Transverse colon (tissue), 4 donors: ENCODE measurements at regions of chr9 and their contacts with region 1.

Region 1: DNA sequence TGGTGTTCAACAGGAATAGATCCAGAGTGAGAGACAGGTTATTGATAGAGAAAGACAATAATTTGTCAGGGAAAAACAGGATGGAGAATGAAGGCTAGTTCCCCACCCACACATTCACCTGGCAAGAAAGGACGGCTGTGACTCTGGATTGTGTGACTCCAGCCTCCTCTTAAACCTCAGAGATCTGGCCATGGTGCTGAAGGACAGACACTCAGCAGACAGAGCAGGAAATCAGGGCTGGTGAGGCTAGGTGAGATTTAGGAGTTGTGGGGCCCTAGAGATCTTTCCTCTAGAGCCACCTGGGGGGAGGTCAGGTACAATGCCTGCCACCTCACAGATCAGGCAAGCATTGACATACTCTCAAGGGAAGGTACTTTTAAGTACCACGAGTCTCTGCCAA is 15.2 kb downstream of the OR1B1 start:
- DNase-seq: no peak
- H3K4me3 ChIP-seq: no peak overlapping the region
- H3K27ac ChIP-seq: no peak overlapping the region
- H3K4me1 ChIP-seq: no peaks in the 10 kb centered on the region
- H3K27me3 ChIP-seq: no peaks in the 10 kb centered on the region
- CTCF ChIP-seq: no peak
- EP300 ChIP-seq: no peak
- POLR2A ChIP-seq: no peak

Region 2: DNA sequence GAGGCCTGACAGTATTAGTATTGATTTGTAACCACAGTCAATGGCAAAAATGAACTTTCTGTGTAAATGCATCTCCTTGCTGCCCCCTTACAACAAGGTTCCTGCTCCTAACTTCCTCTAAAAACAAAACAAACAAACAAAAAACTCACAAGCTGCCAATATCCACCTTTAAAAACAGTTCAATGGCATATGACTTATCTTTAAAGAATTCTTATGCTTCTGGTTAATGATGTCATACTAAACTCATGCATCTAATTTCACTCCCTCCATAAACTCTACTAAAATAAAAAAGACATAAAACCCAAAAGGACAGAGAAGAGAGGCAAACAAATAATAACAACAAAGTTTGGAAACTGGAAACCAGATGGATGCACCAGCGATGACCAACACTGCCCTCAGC is 106.1 kb before region 1 on chr9:
- in situ Hi-C with region 1: loop called in 1 of 4 experiments (anchors 25 kb)
- intact Hi-C with region 1: no loop called
- DNase-seq: no peak
- H3K4me3 ChIP-seq: no peak overlapping the region
- H3K27ac ChIP-seq: no peak overlapping the region
- H3K4me1 ChIP-seq: no peaks in the 10 kb centered on the region
- H3K27me3 ChIP-seq: no peaks in the 10 kb centered on the region
- CTCF ChIP-seq: no peak
- EP300 ChIP-seq: no peak
- POLR2A ChIP-seq: no peak